Activated T-helper 1 cell treated with anti-CD3 and anti-CD28 coated beads, Interleukin-12 subunit alpha, Interleukin-12 subunit beta, Interleukin-2, Interleukin-4 antibody, amounts not matched to agents 30 ng/mL and 10 ng/mL and 1 ng/mL, durations not matched to agents 14 hours and 24 hours and 36 hours (primary cell): ENCODE measurements at regions of chr22 and their contacts with region 1.

Region 1: DNA sequence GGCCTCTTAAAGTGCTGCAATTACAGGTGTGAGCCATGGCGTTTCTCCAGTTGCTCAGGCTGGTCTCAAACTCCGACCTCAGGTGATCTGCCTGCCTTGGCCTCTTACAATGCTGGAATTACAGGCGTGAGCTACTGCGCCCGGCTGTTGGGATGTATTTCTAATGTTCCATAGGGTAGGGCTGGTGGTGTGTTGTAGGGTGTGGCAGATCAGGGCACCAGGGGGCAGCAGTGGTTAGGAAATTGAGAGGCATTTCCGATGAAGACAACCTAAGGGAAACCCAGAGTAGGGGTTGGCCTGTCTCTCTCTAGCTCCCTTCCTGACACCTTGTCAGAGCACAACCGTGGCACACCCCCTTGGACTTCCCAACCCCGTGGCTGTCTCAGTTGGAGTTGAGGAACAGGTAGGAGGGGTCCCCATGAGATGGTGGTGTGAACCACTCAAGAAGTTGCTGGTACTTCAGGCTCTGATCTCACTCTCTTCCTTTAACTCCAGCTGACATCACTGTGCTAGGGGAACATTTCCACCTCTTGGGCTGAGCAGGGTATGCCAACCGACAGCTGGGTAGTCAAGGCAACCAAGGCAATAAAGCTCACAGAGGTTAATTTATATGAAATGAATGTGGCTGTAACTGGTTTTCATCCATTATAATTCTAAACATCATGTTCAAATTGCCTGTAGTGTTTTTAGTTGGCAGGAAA is 33.0 kb downstream of the YWHAH start:
- DNase-seq: peak; percentile 60
- H3K4me3 Mint-ChIP-seq: no peak overlapping the region
- H3K27ac Mint-ChIP-seq: no peak overlapping the region
- H3K4me1 Mint-ChIP-seq: no peaks in the 10 kb centered on the region
- H3K27me3 Mint-ChIP-seq: peaks cover 10% of the 10 kb centered on the region

Region 2: DNA sequence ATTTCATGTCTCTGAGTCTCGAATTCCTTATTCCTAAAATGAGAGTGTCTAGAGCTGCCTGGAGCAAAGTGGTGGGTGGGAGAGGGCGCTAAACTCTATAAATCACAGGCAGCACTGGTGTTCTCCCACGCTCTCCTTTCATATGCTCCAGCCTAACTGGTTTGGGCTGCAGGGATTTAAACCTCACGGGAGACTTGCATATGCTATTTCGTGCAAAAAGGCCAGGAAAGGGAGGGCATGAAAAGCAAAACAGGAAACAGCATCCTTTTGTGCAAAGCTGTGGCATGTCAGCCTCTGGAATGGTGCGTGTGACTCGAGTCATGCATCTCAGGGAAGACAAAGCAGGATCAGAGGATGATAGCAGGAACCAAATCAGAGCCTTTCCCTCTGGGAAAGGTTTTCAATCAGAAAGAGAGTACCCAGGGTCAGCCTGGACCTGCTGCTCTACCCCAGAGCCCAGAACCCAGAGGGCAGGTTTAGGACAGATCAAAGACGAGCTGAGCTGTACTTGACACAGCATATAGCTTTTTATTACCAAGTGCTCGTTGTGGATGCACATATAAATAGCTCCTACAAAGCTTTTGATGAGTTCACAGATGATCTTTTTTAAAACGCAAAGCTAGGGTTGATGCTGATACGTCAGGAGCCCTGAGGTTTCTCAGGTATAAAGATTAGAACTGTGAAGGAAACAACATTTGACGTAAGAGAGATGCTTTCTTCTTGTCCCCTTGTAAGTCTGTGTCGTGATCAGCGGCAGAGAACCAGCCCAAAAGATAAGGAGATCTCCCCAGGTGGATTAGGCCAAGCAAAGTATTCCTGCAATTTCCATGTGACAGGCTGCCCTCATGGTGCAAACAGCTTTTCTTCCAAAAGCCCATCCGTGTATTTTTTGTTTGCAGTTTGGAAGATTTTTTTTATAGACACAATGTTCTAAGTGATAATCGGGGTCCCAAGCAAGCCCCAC is 79.2 kb before region 1 on chr22:
- intact Hi-C with region 1: no loop called
- DNase-seq: no peak
- H3K4me3 Mint-ChIP-seq: no peak overlapping the region
- H3K27ac Mint-ChIP-seq: no peak overlapping the region
- H3K4me1 Mint-ChIP-seq: no peaks in the 10 kb centered on the region
- H3K27me3 Mint-ChIP-seq: no peaks in the 10 kb centered on the region

Region 3: DNA sequence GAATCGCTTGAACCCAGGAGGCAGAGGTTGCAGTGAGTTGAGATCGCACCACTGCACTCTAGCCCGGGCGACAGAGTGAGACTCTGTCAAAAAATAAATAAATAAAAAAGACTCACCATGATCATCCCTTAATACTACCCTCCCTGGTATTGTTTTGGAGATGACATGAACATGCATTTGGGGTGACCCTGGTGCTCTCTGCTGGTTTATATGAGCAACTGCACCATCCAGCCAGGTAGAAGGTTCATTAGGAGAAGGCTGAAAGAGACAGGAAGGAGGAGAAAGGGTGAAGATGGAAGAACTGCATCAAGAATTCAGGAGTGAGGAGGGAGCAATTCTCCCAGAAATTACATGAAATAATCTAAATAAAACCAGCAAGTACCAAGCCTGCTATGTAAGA is 103.6 kb after region 1 on chr22:
- intact Hi-C with region 1: loop called (anchors 1 kb)
- DNase-seq: no peak
- H3K4me3 Mint-ChIP-seq: no peak overlapping the region
- H3K27ac Mint-ChIP-seq: no peak overlapping the region
- H3K4me1 Mint-ChIP-seq: no peaks in the 10 kb centered on the region
- H3K27me3 Mint-ChIP-seq: peaks cover 28% of the 10 kb centered on the region

Region 4: DNA sequence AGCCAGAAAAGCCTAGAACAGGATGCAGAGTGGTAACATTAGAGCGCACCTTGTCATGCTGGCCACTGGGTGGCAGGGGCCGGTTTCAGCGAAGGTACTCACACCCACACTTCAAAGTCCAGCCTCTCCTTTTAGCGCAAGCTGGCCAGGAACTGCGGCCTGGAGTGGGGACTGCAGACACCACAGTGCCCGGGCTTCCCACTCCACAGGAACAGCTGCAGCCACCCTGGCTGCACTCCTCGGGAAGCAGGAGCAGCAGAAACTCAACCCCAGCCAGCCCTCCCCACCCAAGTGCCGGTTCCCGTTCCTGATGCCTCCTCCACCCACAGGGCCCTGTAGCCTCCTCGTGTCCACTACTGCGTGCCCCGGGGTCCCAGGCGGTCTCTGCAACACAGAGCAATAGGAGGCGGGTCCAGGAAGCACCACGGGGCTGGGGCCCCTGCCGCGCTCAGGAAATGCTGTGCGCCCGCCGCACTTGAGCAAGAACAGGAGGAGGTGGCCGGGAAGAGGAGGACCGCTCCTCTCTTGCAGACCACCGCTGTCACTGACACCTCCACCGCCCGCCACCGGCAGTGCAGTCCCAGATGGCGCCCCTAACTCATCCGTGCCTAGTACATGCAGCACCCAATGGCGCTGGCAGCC is 225.4 kb after region 1 on chr22:
- intact Hi-C with region 1: loop called (anchors 1 kb)
- DNase-seq: no peak
- H3K4me3 Mint-ChIP-seq: peak overlapping the region; percentile 68
- H3K27ac Mint-ChIP-seq: no peak overlapping the region
- H3K4me1 Mint-ChIP-seq: peaks cover 34% of the 10 kb centered on the region
- H3K27me3 Mint-ChIP-seq: peaks cover 17% of the 10 kb centered on the region

Region 5: GRCh38 chr22:32265882-32266767 is 288.8 kb after region 1 on chr22:
- intact Hi-C with region 1: loop called (anchors 1 kb)
- DNase-seq: peak; percentile 33
- H3K4me3 Mint-ChIP-seq: no peak overlapping the region
- H3K27ac Mint-ChIP-seq: no peak overlapping the region
- H3K4me1 Mint-ChIP-seq: peaks cover 10% of the 10 kb centered on the region
- H3K27me3 Mint-ChIP-seq: peaks cover 2% of the 10 kb centered on the region